ENCODE measurements at regions of chr1 and their contacts with region 1.

Region 1: GRCh38 chr1:93345633-93346420 is at the start of gene DR1:
- DNase-seq: peak; percentile 95
- H3K4me3 Mint-ChIP-seq: peak within 1 kb of the TSS; percentile 94
- H3K27ac Mint-ChIP-seq: peak within 1 kb of the TSS; percentile 98
- H3K4me1 Mint-ChIP-seq: peaks cover 22% of the 10 kb centered on the region
- H3K27me3 Mint-ChIP-seq: no peaks in the 10 kb centered on the region
- total RNA-seq, gene DR1: 74.9 to 77.4 TPM

Region 2: GRCh38 chr1:93207211-93207610 is 138.6 kb before region 1 on chr1:
- CTCF ChIA-PET with region 1: no interaction called
- POLR2A ChIA-PET with region 1: no interaction called
- intact Hi-C with region 1: no loop called
- DNase-seq: no peak
- H3K4me3 Mint-ChIP-seq: no peak overlapping the region
- H3K27ac Mint-ChIP-seq: no peak overlapping the region
- H3K4me1 Mint-ChIP-seq: no peaks in the 10 kb centered on the region
- H3K27me3 Mint-ChIP-seq: no peaks in the 10 kb centered on the region

Region 3: DNA sequence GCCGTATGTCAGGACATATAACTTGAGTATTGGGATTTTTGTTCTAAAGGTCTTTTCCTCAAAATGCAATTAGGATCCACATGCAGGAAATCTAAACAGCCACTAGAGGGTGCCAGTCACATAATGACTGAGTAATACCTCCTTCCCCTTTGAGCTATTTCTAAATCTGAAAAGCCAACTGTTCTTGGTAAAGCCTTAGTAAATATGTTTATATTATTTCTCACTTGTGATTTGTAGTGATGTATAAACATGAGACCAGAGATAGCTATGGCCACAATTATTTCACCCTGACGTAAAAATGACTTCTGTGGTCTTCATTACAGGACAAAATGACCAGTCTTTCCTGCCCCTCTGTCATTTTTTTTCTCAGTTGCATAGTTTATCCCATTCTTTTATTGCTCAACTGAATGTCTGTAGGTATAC is 41.1 kb before region 1 on chr1:
- CTCF ChIA-PET with region 1: interaction called, 26 read pairs
- POLR2A ChIA-PET with region 1: no interaction called
- intact Hi-C with region 1: loop called (anchors 2 kb)
- DNase-seq: peak; percentile 26
- H3K4me3 Mint-ChIP-seq: no peak overlapping the region
- H3K27ac Mint-ChIP-seq: no peak overlapping the region
- H3K4me1 Mint-ChIP-seq: no peaks in the 10 kb centered on the region
- H3K27me3 Mint-ChIP-seq: no peaks in the 10 kb centered on the region

Region 4: DNA sequence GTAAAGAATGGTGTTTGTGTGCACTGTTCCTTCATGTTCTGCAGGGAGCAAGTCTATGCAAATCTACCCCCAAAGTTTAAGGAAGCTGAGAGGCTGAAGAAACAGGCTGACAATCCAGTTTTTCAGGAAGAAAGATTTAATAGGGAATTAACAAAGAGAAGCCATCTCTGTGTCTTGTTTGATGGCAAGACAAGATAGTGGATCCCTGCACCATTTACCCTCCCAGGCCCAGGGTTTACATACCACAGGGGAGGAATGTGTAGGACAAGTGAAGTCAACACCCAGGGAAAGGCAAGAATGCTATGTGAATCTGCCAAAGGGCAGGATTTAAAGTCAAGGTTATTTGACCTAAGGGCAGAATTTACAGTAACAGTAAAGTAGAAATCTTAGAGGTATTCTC is 54.0 kb after region 1 on chr1:
- CTCF ChIA-PET with region 1: no interaction called
- POLR2A ChIA-PET with region 1: no interaction called
- intact Hi-C with region 1: no loop called
- DNase-seq: no peak
- H3K4me3 Mint-ChIP-seq: no peak overlapping the region
- H3K27ac Mint-ChIP-seq: no peak overlapping the region
- H3K4me1 Mint-ChIP-seq: no peaks in the 10 kb centered on the region
- H3K27me3 Mint-ChIP-seq: no peaks in the 10 kb centered on the region

Region 5: GRCh38 chr1:93615582-93616150 is 269.8 kb after region 1 on chr1:
- CTCF ChIA-PET with region 1: no interaction called
- POLR2A ChIA-PET with region 1: no interaction called
- intact Hi-C with region 1: loop called (anchors 2 kb)
- DNase-seq: peak; percentile 87
- H3K4me3 Mint-ChIP-seq: peak overlapping the region; percentile 45
- H3K27ac Mint-ChIP-seq: peak overlapping the region; percentile 84
- H3K4me1 Mint-ChIP-seq: peaks cover 26% of the 10 kb centered on the region
- H3K27me3 Mint-ChIP-seq: peaks cover 6% of the 10 kb centered on the region

Region 6: GRCh38 chr1:93909146-93910050 is 563.6 kb after region 1 on chr1 and contains the start of gene GCLM:
- CTCF ChIA-PET with region 1: interaction called, 4 read pairs
- POLR2A ChIA-PET with region 1: no interaction called
- intact Hi-C with region 1: loop called (anchors 5 kb)
- DNase-seq: peak; percentile 92
- H3K4me3 Mint-ChIP-seq: peak within 1 kb of the TSS; percentile 91
- H3K27ac Mint-ChIP-seq: peak within 1 kb of the TSS; percentile 87
- H3K4me1 Mint-ChIP-seq: peaks cover 29% of the 10 kb centered on the region
- H3K27me3 Mint-ChIP-seq: no peaks in the 10 kb centered on the region
- total RNA-seq, gene GCLM: 21.7 to 26.5 TPM